ENCODE measurements at regions of chr20 and their contacts with region 1.

Region 1: GRCh38 chr20:45812157-45813020 is at the start of gene UBE2C:
- DNase-seq: peak; percentile 99
- total RNA-seq, gene UBE2C: 0.79 TPM in 1 of 2 donors, not detected in the other

Region 2: DNA sequence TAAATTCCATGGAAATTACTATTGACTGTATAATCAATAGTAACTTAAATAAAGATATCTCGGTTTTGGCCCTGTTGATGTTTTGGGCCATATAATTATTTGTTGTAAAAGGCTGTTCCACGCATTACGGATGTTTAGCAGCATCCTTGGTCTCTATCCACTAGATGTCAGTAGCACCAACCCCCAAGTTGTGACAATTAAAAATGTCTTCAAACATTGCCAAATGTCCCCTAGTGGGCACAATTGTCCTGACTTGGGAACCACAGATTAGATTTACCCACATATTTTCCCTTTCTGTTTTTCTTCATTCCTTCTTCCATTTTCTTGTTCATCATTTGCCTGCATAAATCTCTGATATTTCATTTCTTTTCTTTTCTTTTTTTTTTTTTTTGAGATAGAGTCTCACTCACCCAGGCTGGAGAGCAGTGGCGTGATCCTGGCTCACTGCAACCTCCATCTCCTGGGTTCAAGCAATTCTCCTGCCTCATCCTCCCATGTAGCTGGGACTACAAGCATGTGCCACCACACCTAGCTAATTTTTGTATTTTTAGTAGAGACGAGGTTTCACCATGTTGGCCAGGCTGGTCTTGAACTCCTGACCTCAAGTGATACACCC is 219.7 kb before region 1 on chr20:
- intact Hi-C with region 1: no loop called
- DNase-seq: no peak

Region 3: GRCh38 chr20:45735552-45735951 is 76.8 kb before region 1 on chr20:
- intact Hi-C with region 1: no loop called
- DNase-seq: no peak

Region 4: DNA sequence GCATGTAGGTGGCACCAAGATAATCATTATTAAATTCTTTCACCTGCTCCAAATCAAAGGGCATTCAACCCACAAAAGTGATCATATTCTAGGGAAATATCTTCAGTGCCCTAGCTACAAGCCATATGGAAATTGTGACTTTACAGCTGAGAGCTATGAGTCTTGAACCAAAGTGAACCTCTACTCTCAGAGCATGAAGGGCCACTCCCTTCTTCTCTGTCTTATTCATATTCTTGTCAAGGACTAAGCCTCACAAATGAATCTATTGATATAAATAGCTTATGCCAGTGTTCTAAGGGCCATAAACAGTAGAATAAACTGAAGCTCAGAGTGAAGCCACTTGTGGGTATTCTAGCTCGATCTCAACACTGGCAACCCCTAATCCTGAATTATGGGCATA is 60.7 kb before region 1 on chr20:
- intact Hi-C with region 1: no loop called
- DNase-seq: no peak

Region 5: GRCh38 chr20:45969347-45970242 is 157.2 kb after region 1 on chr20:
- intact Hi-C with region 1: loop called in 1 of 2 experiments (anchors 10 kb)
- DNase-seq: peak; percentile 83

Region 6: GRCh38 chr20:47540443-47541354 is 1728.3 kb after region 1 on chr20:
- intact Hi-C with region 1: no loop called
- DNase-seq: no peak